ENCODE measurements at regions of chr4 and their contacts with region 1.

Region 1: DNA sequence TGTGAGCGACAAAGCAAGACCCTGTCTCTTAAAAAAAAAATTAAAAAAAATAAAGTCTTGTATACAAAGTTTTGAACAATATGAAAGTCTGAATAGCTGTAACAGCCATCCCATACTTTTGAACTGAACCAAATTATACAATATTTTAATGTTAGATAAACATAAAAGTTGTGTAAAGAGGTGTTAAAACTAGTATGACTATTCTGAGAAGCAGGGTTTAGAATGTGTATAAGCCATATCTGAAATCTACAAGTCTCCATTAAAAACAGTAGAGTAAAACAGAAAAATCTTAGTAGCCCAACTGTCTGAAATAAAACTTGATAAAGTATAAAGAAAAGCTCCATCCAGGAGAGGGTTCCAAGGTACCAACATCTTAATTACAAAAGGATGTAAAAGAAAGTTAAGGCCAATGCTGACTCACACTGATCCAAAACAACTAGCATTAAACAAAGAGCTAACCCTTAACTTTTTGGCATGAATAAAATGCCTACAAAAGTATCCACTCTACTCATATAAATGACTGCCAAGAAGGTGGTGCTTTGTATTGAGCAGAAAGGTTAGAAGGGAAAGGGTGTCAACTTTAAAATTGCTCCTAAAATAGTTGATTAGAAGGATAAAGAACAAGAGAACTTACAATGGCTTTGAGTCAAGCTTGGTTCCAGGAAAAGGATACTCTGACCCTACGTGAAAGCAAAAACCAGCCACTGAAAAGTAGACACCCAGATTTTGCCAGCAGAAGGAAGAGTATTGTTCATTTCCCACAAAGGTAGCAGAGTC is 18.5 kb downstream of the CNOT6L start:
- DNase-seq: no peak
- ATAC-seq: peak; percentile 61
- H3K4me3 Mint-ChIP-seq: peak overlapping the region; percentile 79
- H3K27ac Mint-ChIP-seq: peak overlapping the region; percentile 87
- H3K4me1 Mint-ChIP-seq: peaks cover 34% of the 10 kb centered on the region
- H3K27me3 Mint-ChIP-seq: no peaks in the 10 kb centered on the region

Region 2: DNA sequence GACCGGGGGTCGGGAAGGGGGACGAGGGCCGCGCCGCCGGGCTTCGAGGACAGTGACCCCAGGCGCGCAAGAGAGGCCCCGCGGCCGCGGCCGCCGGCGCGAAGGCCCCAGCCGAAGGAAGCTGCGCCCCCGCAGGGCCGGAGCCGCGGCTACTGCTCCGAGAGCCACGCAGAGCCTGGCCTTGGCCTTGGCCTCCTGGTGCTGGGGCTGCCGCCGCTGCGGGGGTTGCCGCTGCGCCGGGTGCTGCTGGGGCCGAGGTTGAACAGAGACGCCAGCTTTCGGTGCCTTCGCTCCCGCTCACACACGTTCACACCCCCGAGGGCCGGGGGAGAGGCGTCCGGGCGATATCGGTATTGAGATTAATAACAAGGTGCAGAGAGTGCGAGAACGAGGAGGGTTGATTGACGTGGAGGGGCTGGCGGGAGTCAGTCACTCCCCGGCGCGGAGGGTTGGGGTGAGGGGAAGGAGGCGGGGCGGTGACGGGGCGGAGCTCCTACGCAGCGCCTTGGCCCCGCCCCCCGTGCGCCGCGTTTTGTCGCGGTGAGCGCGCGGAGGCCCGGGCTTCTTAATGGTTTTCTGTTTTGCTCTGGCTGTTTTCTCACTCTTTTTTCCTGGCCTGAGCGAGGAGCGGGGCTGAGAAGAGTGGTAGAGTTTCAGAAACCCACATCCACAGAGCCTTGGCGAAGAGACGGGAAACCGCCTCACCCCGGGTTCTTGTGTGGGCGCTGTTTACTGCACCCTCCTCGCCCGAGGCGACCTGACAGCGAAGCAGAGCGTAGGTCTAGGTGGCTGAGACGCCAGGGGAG is 19.4 kb after region 1 on chr4:
- POLR2A ChIA-PET with region 1: interaction called, 14 read pairs
- DNase-seq: peak; percentile 98
- ATAC-seq: peak; percentile 76
- H3K4me3 Mint-ChIP-seq: peak overlapping the region; percentile 91
- H3K27ac Mint-ChIP-seq: peak overlapping the region; percentile 90
- H3K4me1 Mint-ChIP-seq: peaks cover 41% of the 10 kb centered on the region
- H3K27me3 Mint-ChIP-seq: no peaks in the 10 kb centered on the region

Region 3: DNA sequence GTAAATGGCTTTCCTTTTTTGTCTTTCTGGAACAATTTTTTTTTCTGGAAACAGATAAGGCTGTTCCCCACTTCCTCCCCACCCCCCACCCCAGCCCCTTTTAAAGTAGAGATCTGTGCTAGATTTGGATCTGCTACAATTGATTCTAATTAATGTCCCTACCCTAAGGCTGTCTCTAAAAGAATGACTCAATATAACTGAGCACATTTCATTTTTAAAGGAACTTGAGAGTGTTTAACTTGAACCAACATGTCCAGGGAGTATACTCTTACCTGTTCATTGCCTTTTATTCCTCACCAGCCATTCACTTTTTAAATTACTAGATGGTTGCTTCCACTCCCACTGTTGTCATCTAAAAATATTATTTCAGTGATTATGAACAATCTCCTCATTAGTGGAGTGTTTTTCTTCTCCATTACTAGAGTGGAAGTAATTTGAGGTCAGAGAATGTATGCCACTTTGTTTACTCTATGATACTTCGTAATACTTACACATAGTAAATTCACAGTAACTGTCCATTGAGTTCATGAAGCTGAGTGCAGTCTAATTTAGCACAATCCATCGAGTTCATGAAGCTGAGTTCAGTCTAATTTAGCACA is 32.6 kb after region 1 on chr4:
- POLR2A ChIA-PET with region 1: no interaction called
- DNase-seq: no peak
- ATAC-seq: no peak
- H3K4me3 Mint-ChIP-seq: no peak overlapping the region
- H3K27ac Mint-ChIP-seq: no peak overlapping the region
- H3K4me1 Mint-ChIP-seq: peaks cover 7% of the 10 kb centered on the region
- H3K27me3 Mint-ChIP-seq: no peaks in the 10 kb centered on the region

Measured in activated naive CD8-positive, alpha-beta T cell treated with anti-CD3 and anti-CD28 coated beads, Interleukin-2, amount 10 ng/mL, durations not matched to agents 7 days and 5 days (primary cell).